CD8-positive, alpha-beta T cell (primary cell): ENCODE measurements at regions of chr3 and their contacts with region 1.

Region 1: GRCh38 chr3:82133070-82133606 is 371.7 kb upstream of the GBE1 start:
- DNase-seq: peak in 8 of 9 experiments; percentile 8 to 53 (median 36)
- ATAC-seq: peak; percentile 51
- H3K4me3 ChIP-seq: no peak overlapping the region
- H3K4me3 Mint-ChIP-seq: no peak overlapping the region
- H3K27ac ChIP-seq: no peak overlapping the region
- H3K27ac Mint-ChIP-seq: no peak overlapping the region
- H3K4me1 ChIP-seq: no peaks in the 10 kb centered on the region
- H3K4me1 Mint-ChIP-seq: no peaks in the 10 kb centered on the region
- H3K27me3 ChIP-seq: no peaks in the 10 kb centered on the region
- H3K27me3 Mint-ChIP-seq: no peaks in the 10 kb centered on the region
- CTCF ChIP-seq: peak; percentile 72

Region 2: DNA sequence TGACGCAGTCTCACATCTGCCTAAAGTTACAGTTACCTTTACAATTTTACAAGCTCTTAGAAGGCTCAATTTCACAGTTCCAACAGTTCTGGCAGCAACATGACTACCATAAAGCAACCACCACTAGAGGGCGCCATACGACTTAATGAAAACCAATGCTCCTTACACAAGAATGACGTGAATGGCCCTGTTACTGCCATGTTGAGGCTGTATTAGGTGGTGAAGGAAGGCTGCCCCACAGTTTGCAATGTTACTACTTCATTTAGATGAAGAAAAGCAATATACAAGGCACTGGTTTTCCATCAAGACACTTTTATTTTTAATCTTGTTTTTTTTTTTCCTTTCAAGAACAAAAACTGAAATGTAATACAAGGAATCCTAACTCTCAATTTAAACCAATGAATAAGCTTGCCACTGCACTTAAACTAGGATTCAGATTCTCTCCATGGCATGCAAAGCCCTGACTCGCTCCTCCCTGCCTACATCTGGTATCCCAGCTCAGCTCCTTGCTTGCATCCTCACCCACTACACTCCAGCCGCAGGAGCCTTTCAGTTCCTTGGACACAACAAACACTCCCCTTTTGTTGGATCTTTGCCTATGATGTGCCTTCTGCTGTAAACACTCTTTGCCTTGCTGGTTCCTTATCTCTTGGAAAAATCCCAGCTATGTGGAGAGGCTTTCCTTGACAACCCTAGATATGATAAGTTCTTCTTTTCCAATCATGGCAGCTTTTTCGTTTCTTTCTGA is 642.4 kb before region 1 on chr3:
- CTCF ChIA-PET with region 1: interaction called, 3 read pairs
- POLR2A ChIA-PET with region 1: no interaction called
- intact Hi-C with region 1: loop called (anchors 1 to 2 kb)
- DNase-seq: peak; percentile 45 to 76 (median 71)
- ATAC-seq: peak; percentile 69
- H3K4me3 ChIP-seq: no peak overlapping the region
- H3K4me3 Mint-ChIP-seq: no peak overlapping the region
- H3K27ac ChIP-seq: no peak overlapping the region
- H3K27ac Mint-ChIP-seq: no peak overlapping the region
- H3K4me1 ChIP-seq: no peaks in the 10 kb centered on the region
- H3K4me1 Mint-ChIP-seq: peaks cover 2% of the 10 kb centered on the region
- H3K27me3 ChIP-seq: no peaks in the 10 kb centered on the region
- H3K27me3 Mint-ChIP-seq: no peaks in the 10 kb centered on the region
- CTCF ChIP-seq: peak; percentile 84

Region 3: DNA sequence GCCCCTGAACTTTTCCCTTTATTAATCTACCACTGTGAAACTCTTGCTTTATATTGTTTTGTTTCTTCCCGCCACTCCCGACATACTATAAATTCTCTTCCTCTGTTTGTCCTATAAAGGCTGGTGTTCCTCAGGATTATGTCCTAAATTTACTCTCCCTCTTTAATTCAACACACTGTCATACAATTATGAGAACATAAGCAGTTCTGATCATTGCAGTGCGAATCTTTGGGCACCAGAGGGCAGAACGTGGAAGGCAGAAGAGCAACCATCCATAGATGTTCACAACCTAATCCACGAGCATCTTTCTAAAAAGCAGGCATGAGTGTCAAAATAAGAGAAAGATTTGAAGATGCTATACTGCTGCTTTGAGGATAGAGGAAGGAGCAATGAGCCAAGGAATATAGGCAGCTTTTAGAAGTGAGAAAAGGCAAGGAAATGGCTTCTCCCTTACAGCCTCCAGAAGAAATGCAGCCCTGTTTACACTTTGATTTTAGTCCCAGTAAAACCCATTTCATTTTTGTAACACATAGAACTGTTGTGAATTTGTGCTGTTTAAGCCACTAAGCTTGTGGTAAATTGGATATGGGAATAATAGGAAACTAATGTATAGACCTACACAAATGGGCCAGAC is 551.1 kb before region 1 on chr3:
- CTCF ChIA-PET with region 1: interaction called, 4 read pairs
- POLR2A ChIA-PET with region 1: no interaction called
- intact Hi-C with region 1: loop called (anchors 5 kb)
- DNase-seq: peak in 4 of 9 experiments; percentile 4 to 20 (median 10)
- ATAC-seq: no peak
- H3K4me3 ChIP-seq: no peak overlapping the region
- H3K4me3 Mint-ChIP-seq: no peak overlapping the region
- H3K27ac ChIP-seq: no peak overlapping the region
- H3K27ac Mint-ChIP-seq: no peak overlapping the region
- H3K4me1 ChIP-seq: no peaks in the 10 kb centered on the region
- H3K4me1 Mint-ChIP-seq: no peaks in the 10 kb centered on the region
- H3K27me3 ChIP-seq: no peaks in the 10 kb centered on the region
- H3K27me3 Mint-ChIP-seq: no peaks in the 10 kb centered on the region
- CTCF ChIP-seq: no peak

Region 4: GRCh38 chr3:81666493-81667121 is 466.5 kb before region 1 on chr3:
- CTCF ChIA-PET with region 1: interaction called, 12 read pairs
- POLR2A ChIA-PET with region 1: no interaction called
- intact Hi-C with region 1: loop called in 1 of 2 experiments (anchors 1 kb)
- DNase-seq: peak in 2 of 9 experiments; percentile 7 to 21
- ATAC-seq: no peak
- H3K4me3 ChIP-seq: no peak overlapping the region
- H3K4me3 Mint-ChIP-seq: no peak overlapping the region
- H3K27ac ChIP-seq: no peak overlapping the region
- H3K27ac Mint-ChIP-seq: no peak overlapping the region
- H3K4me1 ChIP-seq: no peaks in the 10 kb centered on the region
- H3K4me1 Mint-ChIP-seq: no peaks in the 10 kb centered on the region
- H3K27me3 ChIP-seq: no peaks in the 10 kb centered on the region
- H3K27me3 Mint-ChIP-seq: no peaks in the 10 kb centered on the region
- CTCF ChIP-seq: peak; percentile 60

Region 5: GRCh38 chr3:82100378-82100777 is 32.8 kb before region 1 on chr3:
- CTCF ChIA-PET with region 1: no interaction called
- POLR2A ChIA-PET with region 1: no interaction called
- intact Hi-C with region 1: no loop called
- DNase-seq: no peak
- ATAC-seq: no peak
- H3K4me3 ChIP-seq: no peak overlapping the region
- H3K4me3 Mint-ChIP-seq: no peak overlapping the region
- H3K27ac ChIP-seq: no peak overlapping the region
- H3K27ac Mint-ChIP-seq: no peak overlapping the region
- H3K4me1 ChIP-seq: no peaks in the 10 kb centered on the region
- H3K4me1 Mint-ChIP-seq: no peaks in the 10 kb centered on the region
- H3K27me3 ChIP-seq: no peaks in the 10 kb centered on the region
- H3K27me3 Mint-ChIP-seq: no peaks in the 10 kb centered on the region
- CTCF ChIP-seq: no peak